Upper lobe of right lung (tissue), 1 donor: ENCODE measurements at regions of chr19 and their contacts with region 1.

Region 1: DNA sequence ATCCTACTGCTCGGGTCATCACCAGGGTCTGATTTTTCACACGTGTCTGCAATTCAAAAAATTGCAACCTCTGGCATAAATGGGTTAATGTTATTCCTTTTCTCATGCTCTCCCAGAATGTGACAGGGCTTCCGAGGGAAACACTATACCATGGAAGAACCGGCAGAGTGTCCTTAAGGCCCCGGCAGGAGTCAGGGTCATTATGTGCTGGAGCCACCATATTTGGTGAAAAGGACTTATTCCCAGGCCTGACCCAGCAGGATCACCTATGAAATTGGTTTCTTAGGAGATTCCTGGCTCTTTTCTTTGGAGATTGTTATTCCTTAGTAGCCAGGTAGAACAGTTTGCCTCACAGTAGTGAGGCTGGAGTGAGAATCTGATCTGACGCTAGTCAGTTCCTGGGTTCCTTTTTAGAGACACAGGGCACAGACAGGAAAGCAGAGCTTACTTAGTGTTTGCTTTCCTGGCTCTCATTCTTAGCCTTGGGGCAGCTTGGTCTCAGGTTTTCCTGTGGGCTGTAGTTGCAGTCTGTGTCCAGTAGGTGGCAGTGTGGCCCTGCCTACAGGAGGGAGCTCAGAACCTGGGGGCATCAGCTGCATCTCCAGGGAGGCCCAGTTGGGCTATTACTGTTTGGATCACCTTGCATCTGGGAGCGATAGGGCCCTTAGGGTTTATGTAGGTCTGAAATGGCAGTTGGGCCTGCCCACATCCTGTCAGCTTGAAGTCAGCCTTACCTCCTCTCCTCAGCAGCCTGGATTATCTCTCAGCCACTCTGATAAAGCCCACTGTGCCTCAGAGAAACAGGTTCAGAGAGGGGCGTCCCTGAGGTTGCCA is 12.4 kb downstream of the SNRNP70 start:
- DNase-seq: no peak
- ATAC-seq: peak; percentile 95
- H3K4me3 ChIP-seq: no peak overlapping the region
- H3K27ac ChIP-seq: no peak overlapping the region
- H3K4me1 ChIP-seq: peaks cover 3% of the 10 kb centered on the region
- H3K27me3 ChIP-seq: no peaks in the 10 kb centered on the region
- CTCF ChIP-seq: peak; percentile 100

Region 2: GRCh38 chr19:49148784-49149651 is 51.3 kb after region 1 on chr19:
- intact Hi-C with region 1: loop called (anchors 10 kb)
- DNase-seq: peak; percentile 98
- ATAC-seq: peak; percentile 86
- H3K4me3 ChIP-seq: peak overlapping the region; percentile 72
- H3K27ac ChIP-seq: peak overlapping the region; percentile 70
- H3K4me1 ChIP-seq: peaks cover 23% of the 10 kb centered on the region
- H3K27me3 ChIP-seq: no peaks in the 10 kb centered on the region
- CTCF ChIP-seq: no peak

Region 3: GRCh38 chr19:49210108-49210900 is 112.6 kb after region 1 on chr19:
- intact Hi-C with region 1: loop called (anchors 5 kb)
- DNase-seq: peak; percentile 71
- ATAC-seq: peak; percentile 81
- H3K4me3 ChIP-seq: no peak overlapping the region
- H3K27ac ChIP-seq: no peak overlapping the region
- H3K4me1 ChIP-seq: peaks cover 3% of the 10 kb centered on the region
- H3K27me3 ChIP-seq: no peaks in the 10 kb centered on the region
- CTCF ChIP-seq: no peak